ENCODE measurements at regions of chr2 and their contacts with region 1.

Region 1: DNA sequence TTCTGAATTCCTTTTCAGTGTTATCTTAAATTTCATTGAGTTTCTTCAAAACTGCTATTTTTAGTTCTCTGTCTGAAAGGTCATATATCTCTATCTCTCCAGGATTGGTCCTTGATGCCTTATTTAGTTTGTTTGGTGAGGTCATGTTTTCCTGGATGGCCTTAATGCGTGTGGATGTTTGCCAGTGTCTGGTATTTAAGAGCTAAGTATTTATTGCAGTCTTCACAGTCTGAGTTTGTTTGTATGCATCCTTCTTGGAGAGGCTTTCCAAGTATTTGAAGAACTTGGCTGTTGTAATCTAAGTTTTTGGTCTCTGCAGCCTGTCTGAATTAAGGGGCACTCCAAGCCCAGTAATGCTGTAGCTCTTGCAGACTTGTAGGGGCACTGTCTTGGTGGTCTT is 249.3 kb downstream of the ZNF385B start:
- DNase-seq: no peak
- ATAC-seq: no peak
- H3K4me3 ChIP-seq: no peak overlapping the region
- H3K27ac ChIP-seq: no peak overlapping the region
- H3K4me1 ChIP-seq: no peaks in the 10 kb centered on the region
- H3K27me3 ChIP-seq: no peaks in the 10 kb centered on the region
- CTCF ChIP-seq: no peak

Region 2: GRCh38 chr2:179422037-179422643 is 190.0 kb before region 1 on chr2:
- intact Hi-C with region 1: loop called in 1 of 10 experiments (anchors 10 kb)
- DNase-seq: peak; percentile 44 to 54
- ATAC-seq: peak in 5 of 8 donors; percentile 46 to 69 (median 61)
- H3K4me3 ChIP-seq: no peak overlapping the region
- H3K27ac ChIP-seq: no peak overlapping the region
- H3K4me1 ChIP-seq: no peaks in the 10 kb centered on the region
- H3K27me3 ChIP-seq: peaks cover 0 to 17% (median 0%) of the 10 kb centered on the region in 7 donors
- CTCF ChIP-seq: peak; percentile 36 to 81 (median 70)

Region 3: GRCh38 chr2:179550214-179550613 is 61.9 kb before region 1 on chr2:
- intact Hi-C with region 1: no loop called
- DNase-seq: no peak
- ATAC-seq: no peak
- H3K4me3 ChIP-seq: no peak overlapping the region
- H3K27ac ChIP-seq: no peak overlapping the region
- H3K4me1 ChIP-seq: no peaks in the 10 kb centered on the region
- H3K27me3 ChIP-seq: peaks cover 0 to 5% (median 0%) of the 10 kb centered on the region in 7 donors
- CTCF ChIP-seq: no peak

Region 4: DNA sequence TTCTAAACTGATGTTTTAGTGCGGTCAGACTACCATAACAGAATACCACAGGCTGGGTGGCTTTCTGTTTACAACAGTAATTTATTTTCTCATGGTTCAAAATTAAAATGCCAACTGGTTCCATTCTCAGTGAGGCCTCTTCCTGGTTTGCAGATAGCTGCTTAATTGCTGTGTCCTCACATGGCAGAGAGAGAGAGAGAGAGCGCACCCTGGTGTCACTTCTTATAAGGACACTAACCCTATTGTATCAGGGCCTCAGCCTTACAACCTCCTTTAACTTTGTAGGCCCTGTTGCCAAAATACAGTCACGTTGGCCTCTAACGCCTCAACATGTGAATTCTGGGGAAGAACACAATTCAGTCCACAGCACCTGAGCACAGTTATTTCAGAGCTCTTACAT is 286.8 kb after region 1 on chr2:
- intact Hi-C with region 1: no loop called
- DNase-seq: no peak
- ATAC-seq: no peak
- H3K4me3 ChIP-seq: no peak overlapping the region
- H3K27ac ChIP-seq: no peak overlapping the region
- H3K4me1 ChIP-seq: no peaks in the 10 kb centered on the region
- H3K27me3 ChIP-seq: no peaks in the 10 kb centered on the region
- CTCF ChIP-seq: peak in 2 of 9 donors; percentile 12 to 15

Measured in heart right ventricle (tissue), 16 donors.